Right lobe of liver (tissue), 6 donors: ENCODE measurements at regions of chr3 and their contacts with region 1.

Region 1: DNA sequence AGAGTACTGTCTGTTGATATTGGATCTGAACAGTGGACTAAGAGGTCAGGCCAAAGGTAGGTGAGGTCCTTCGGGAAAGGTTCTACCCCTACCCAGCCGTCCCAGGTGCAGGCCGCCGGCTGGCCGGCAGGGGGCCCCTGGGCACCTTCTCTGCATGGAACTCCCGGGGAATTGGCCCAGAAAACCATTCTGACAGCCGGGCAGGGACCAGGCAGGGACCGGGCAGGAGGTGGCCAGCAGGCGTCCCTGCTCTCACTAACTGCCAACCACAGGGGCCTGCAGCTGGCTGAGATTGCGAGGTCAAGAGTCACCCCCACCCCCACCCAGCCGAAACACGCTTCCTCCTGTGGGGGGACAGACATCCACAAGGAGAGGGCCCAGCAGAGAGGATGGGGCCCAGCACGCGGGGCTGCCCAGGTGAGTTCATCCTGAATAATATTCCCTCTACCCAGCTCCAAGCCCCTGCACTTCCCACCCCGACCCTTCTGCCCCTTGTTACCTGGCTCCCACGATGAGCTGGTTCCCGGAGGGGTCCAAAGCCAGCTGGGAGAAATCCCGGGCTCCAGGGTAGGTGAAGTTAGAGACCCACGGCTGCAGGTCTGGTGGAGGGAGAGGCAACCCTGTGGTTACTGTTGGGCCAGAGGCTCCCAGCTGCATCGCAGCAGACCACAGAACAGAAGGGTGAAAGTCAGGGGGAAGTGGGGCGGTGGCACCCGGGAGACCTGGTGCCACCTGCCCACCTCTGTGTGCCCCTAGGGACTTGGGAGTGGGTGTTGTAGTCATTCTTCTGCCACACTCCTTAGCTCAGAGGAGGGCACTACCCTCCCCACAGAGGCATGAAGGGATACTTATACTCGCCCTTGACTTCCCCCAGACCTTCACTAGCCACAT is 84.4 kb downstream of the SEMA5B start:
- DNase-seq: peak; percentile 82 to 89 (median 89)
- ATAC-seq: peak; percentile 98 to 99 (median 98)
- H3K4me3 ChIP-seq: no peak overlapping the region
- H3K27ac ChIP-seq: no peak overlapping the region
- H3K4me1 ChIP-seq: peaks cover 0 to 4% (median 0%) of the 10 kb centered on the region in 4 donors
- H3K27me3 ChIP-seq: no peaks in the 10 kb centered on the region
- CTCF ChIP-seq: peak; percentile 91 to 98 (median 94)
- POLR2A ChIP-seq: no peak

Region 2: DNA sequence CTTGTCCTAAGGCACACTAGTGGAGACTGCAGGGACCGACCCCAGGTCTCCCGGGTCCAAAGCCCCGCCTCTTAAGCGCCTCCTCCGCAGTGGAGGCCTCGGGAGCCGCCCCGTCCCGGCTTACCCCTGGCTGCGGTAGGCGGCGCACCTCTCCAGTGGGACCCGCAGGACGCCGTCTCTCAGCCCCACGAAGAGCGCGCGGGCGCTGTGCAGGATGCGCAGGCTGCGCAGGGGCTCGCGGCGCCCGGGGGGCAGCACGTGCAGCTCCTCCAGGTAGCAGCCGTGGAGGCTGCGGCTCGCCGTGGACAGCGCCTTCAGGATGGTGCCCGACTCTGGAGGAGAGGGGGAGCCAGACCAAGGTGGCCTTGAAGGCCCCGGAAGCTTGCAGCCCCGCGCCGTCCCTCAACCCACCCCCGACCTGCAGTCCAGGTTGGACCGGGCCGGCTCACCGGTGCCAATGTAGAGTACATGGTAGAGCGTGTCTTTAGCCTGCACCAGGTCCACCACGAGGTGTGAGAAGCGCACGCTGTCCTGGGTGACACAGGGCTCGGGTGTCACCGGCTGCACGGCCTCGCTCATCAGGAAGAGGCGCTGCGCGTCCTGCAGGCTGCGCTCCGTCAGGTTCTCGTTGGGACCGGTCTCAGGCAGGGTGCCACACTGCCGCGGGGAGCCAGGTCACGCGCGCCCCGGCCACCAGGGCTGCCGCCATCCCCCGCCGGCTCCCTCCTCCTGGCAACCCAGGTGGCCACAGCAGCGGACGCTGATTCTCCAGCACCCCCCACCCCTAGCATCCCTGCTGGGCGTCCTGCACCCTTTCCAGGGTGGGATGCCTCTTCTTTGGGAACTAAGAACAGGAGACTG is 21.2 kb before region 1 on chr3:
- intact Hi-C with region 1: no loop called
- DNase-seq: no peak
- ATAC-seq: peak; percentile 22 to 45 (median 32)
- H3K4me3 ChIP-seq: peak overlapping the region in 1 of 3 donors; percentile 10
- H3K27ac ChIP-seq: no peak overlapping the region
- H3K4me1 ChIP-seq: peaks cover 0 to 6% (median 0%) of the 10 kb centered on the region in 4 donors
- H3K27me3 ChIP-seq: no peaks in the 10 kb centered on the region
- CTCF ChIP-seq: no peak
- POLR2A ChIP-seq: no peak

Region 3: GRCh38 chr3:123015557-123015956 is 72.4 kb after region 1 on chr3:
- intact Hi-C with region 1: loop called in 1 of 2 experiments (anchors 10 kb)
- DNase-seq: no peak
- ATAC-seq: no peak
- H3K4me3 ChIP-seq: no peak overlapping the region
- H3K27ac ChIP-seq: no peak overlapping the region
- H3K4me1 ChIP-seq: no peaks in the 10 kb centered on the region
- H3K27me3 ChIP-seq: no peaks in the 10 kb centered on the region
- CTCF ChIP-seq: no peak
- POLR2A ChIP-seq: no peak

Region 4: GRCh38 chr3:123028233-123028828 is 85.1 kb after region 1 on chr3:
- intact Hi-C with region 1: loop called in 1 of 2 experiments (anchors 5 kb)
- DNase-seq: no peak
- ATAC-seq: peak; percentile 60 to 64 (median 61)
- H3K4me3 ChIP-seq: peak overlapping the region; percentile 55 to 60 (median 56)
- H3K27ac ChIP-seq: no peak overlapping the region
- H3K4me1 ChIP-seq: peaks cover 0 to 21% (median 8%) of the 10 kb centered on the region in 4 donors
- H3K27me3 ChIP-seq: peaks cover 0 to 5% of the 10 kb centered on the region in 2 donors
- CTCF ChIP-seq: peak; percentile 38 to 62 (median 58)
- POLR2A ChIP-seq: no peak

Region 5: DNA sequence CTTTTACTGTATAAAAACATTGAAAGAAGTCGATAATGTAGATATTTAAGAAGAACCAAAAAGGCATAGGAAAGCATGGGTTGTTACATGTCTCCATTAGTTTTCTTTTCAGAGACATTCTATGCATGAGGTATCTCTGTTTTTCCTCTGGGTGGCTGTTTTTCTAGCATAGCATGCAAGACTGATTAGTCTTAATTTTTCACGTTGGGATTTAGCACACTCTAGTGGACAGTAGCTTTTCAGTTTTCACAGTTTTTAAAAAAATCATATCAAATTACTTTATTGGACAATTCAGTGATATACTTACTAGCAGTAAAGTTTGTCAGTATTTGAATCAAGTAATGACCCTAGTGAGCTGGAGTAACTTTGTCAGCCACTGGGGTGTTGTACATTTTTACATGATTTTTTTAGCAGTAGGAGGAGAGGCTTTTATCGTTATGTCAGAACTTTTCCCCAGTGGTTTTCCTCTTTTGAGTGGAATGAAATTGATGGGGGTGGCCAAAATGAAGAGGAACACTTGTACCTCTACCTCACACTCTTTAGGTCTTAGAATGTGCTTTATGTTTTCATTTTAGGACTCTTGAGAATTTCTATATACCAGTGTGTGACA is 315.7 kb after region 1 on chr3:
- intact Hi-C with region 1: loop called (anchors 10 kb)
- DNase-seq: no peak
- ATAC-seq: peak; percentile 89 to 96 (median 92)
- H3K4me3 ChIP-seq: no peak overlapping the region
- H3K27ac ChIP-seq: no peak overlapping the region
- H3K4me1 ChIP-seq: no peaks in the 10 kb centered on the region
- H3K27me3 ChIP-seq: no peaks in the 10 kb centered on the region
- CTCF ChIP-seq: peak; percentile 63 to 81 (median 70)
- POLR2A ChIP-seq: no peak

Region 6: GRCh38 chr3:123267821-123268220 is 324.6 kb after region 1 on chr3:
- intact Hi-C with region 1: loop called in 1 of 2 experiments (anchors 10 kb)
- DNase-seq: no peak
- ATAC-seq: no peak
- H3K4me3 ChIP-seq: no peak overlapping the region
- H3K27ac ChIP-seq: no peak overlapping the region
- H3K4me1 ChIP-seq: peaks cover 0 to 3% (median 0%) of the 10 kb centered on the region in 4 donors
- H3K27me3 ChIP-seq: no peaks in the 10 kb centered on the region
- CTCF ChIP-seq: peak in 1 of 4 donors; percentile 5
- POLR2A ChIP-seq: no peak